ENCODE measurements at regions of chr2 and their contacts with region 1.

Region 1: GRCh38 chr2:39234754-39235153 is 9.0 kb downstream of the CDKL4 start:
- DNase-seq: no peak
- H3K4me3 ChIP-seq: no peak overlapping the region
- H3K27ac ChIP-seq: no peak overlapping the region
- H3K4me1 ChIP-seq: no peaks in the 10 kb centered on the region
- H3K27me3 ChIP-seq: no peaks in the 10 kb centered on the region
- CTCF ChIP-seq: no peak
- POLR2A ChIP-seq: no peak

Region 2: GRCh38 chr2:38947240-38948239 is 287.2 kb before region 1 on chr2:
- intact Hi-C with region 1: loop called (anchors 5 kb)
- DNase-seq: no peak
- H3K4me3 ChIP-seq: no peak overlapping the region
- H3K27ac ChIP-seq: peak overlapping the region in 1 of 4 donors; percentile 25
- H3K4me1 ChIP-seq: peaks cover 0 to 16% (median 4%) of the 10 kb centered on the region in 3 donors
- H3K27me3 ChIP-seq: no peaks in the 10 kb centered on the region
- CTCF ChIP-seq: peak in 5 of 6 experiments; percentile 56 to 66 (median 63)
- POLR2A ChIP-seq: no peak

Region 3: DNA sequence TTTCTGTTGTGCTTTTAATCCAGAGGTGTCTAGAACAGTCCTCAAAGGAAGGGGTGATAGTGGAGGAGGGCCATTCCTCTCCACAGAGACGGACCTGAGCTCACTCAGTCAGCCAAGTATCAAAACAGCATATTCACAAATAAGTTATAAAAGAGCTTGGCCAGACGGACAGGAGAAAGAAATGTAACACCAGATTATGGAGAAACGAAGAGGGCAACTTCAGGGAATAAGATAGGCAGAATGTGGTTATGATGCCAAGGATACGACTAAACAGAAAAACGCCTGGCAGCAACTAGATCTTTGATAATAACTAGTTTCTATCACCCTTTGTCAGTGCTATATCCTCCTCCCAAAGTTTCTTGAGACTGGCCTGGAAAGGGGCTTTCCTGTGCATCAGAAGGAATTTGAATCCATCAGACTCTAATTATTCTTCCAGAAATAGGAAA is 159.8 kb after region 1 on chr2:
- intact Hi-C with region 1: no loop called
- DNase-seq: no peak
- H3K4me3 ChIP-seq: no peak overlapping the region
- H3K27ac ChIP-seq: no peak overlapping the region
- H3K4me1 ChIP-seq: peaks cover 0 to 28% (median 4%) of the 10 kb centered on the region in 3 donors
- H3K27me3 ChIP-seq: no peaks in the 10 kb centered on the region
- CTCF ChIP-seq: no peak
- POLR2A ChIP-seq: no peak